ENCODE measurements at regions of chrX and their contacts with region 1.

Region 1: GRCh38 chrX:39409246-39409917 is 608.1 kb downstream of the MID1IP1 start:
- DNase-seq: no peak

Region 2: GRCh38 chrX:39336671-39337311 is 72.6 kb before region 1 on chrX:
- intact Hi-C with region 1: loop called (anchors 10 kb)
- DNase-seq: no peak

Region 3: DNA sequence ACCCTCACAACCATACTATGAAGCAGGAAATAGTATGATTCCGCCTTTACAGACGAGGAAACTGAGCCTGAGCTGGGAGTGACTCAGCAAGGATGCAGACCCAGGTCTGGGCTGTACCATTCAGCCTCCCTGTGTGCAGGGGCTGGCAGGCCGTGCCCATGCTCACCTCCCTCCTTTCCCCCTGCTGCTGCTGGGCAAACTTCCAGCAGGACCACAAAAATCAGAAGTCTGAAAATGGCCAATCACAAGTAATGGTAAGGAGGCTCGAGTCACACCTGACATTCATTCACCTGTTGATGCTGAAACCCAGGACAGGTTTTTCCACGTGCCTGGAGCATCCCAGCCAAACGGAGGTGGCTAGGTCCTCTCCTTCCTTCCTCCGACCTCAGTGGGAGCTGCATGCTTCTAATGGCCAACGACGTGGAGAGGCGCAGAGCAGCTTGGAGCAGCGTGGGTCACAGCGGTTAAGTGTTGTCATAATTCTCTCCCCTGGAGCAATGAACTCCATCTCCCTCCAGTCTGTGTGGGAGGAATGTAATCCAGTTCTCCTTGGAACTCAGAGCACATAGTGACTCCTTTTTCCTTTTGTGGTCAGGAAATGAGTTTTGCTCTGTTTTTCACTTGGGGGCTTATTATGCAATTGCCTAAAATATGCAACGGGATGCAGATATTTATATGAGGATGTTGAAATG is 316.7 kb after region 1 on chrX:
- intact Hi-C with region 1: no loop called
- DNase-seq: no peak